Thyroid gland (tissue), 4 donors: ENCODE measurements at regions of chr15 and their contacts with region 1.

Region 1: GRCh38 chr15:31488426-31489204 is 162.0 kb downstream of the KLF13 start:
- DNase-seq: peak; percentile 59
- H3K4me3 ChIP-seq: no peak overlapping the region
- H3K27ac ChIP-seq: peak overlapping the region in 2 of 3 donors; percentile 27 to 34
- H3K4me1 ChIP-seq: peaks cover 5 to 22% of the 10 kb centered on the region in 2 donors
- H3K27me3 ChIP-seq: no peaks in the 10 kb centered on the region
- CTCF ChIP-seq: peak; percentile 84 to 99 (median 94)
- POLR2A ChIP-seq: no peak

Region 2: DNA sequence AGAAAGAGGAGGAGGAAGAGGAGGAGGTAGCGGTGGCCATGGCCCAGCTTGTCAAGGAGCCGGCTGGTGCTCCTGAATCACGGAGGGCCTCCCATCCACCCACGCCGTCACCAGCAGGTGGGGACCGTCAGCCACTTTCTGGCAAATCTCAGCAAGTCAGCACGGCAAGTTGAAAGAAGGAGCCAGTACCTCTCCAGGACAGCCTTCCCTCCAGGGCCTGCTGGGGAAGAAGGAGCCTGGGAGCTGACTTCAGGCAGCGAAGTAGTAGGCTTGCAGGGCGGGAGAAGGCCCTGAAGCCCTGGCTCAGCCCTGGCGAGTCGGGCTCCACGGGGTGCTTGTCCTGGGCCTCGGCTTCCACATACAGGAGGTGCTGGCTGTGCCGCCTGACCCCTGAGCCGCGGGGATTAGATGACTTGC is 287.9 kb before region 1 on chr15:
- intact Hi-C with region 1: loop called (anchors 5 kb)
- DNase-seq: peak; percentile 90 to 91
- H3K4me3 ChIP-seq: no peak overlapping the region
- H3K27ac ChIP-seq: no peak overlapping the region
- H3K4me1 ChIP-seq: peaks cover 0 to 4% of the 10 kb centered on the region in 2 donors
- H3K27me3 ChIP-seq: no peaks in the 10 kb centered on the region
- CTCF ChIP-seq: peak; percentile 22 to 89 (median 68)
- POLR2A ChIP-seq: no peak

Region 3: GRCh38 chr15:31391687-31392671 is 96.6 kb before region 1 on chr15:
- intact Hi-C with region 1: loop called (anchors 10 kb)
- DNase-seq: peak; percentile 91
- H3K4me3 ChIP-seq: peak overlapping the region; percentile 70 to 89 (median 75)
- H3K27ac ChIP-seq: peak overlapping the region; percentile 97 to 98 (median 97)
- H3K4me1 ChIP-seq: peaks cover 22 to 28% of the 10 kb centered on the region in 2 donors
- H3K27me3 ChIP-seq: no peaks in the 10 kb centered on the region
- CTCF ChIP-seq: no peak
- POLR2A ChIP-seq: peak; percentile 18 to 93